PC-9 (cell line): ENCODE measurements at regions of chr2 and their contacts with region 1.

Region 1: GRCh38 chr2:224408676-224409075 is 6.8 kb upstream of the FAM124B start:
- DNase-seq: no peak
- H3K4me3 ChIP-seq: no peak overlapping the region
- H3K27ac ChIP-seq: no peak overlapping the region
- H3K4me1 ChIP-seq: no peaks in the 10 kb centered on the region
- H3K27me3 ChIP-seq: no peaks in the 10 kb centered on the region
- CTCF ChIP-seq: no peak

Region 2: GRCh38 chr2:224252631-224253030 is 156.0 kb before region 1 on chr2:
- CTCF ChIA-PET with region 1: interaction called, 12 read pairs
- POLR2A ChIA-PET with region 1: no interaction called
- intact Hi-C with region 1: no loop called
- DNase-seq: no peak
- H3K4me3 ChIP-seq: no peak overlapping the region
- H3K27ac ChIP-seq: no peak overlapping the region
- H3K4me1 ChIP-seq: peaks cover 11% of the 10 kb centered on the region
- H3K27me3 ChIP-seq: no peaks in the 10 kb centered on the region
- CTCF ChIP-seq: no peak